Activated CD4-positive, alpha-beta memory T cell treated with anti-CD3 and anti-CD28 coated beads for 36 hours (primary cell): ENCODE measurements at regions of chr6 and their contacts with region 1.

Region 1: DNA sequence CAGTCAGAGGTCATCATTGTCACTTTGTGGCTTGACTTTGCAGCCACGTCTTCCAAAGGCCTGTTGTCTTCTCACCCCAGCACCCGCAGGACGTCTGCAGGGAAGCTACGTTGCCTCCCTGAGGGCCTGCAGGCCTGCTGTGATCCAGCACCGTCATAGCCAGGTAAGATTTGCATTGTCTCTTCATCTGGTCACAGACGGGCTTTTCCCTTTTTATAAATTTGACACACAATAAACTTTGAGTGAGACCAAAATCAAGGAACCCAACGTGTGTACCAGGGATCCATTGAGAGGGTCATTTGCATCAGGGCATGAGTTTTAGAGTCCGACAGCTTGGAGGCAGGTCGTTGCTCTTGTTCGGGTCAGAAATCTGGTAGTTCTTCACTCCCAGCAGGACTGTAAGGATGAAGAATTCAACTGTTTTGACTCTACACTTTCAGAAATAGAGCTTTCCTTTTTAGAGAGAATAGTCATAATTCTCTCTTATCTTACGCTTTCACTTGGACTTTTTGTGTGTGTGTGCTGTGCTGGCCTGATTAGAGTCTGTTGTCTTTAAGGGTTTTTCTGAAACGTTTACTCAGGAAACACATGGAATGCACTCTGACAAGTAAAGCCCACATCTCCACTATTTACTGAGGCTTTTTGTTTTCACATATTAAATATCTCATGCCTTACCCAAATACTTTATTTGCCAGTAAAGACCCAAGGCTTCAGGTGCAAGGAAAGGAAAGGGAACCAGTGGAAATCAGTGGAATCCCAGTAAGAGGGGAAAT is 177.2 kb upstream of the TAB2 start:
- DNase-seq: peak; percentile 93
- H3K4me3 Mint-ChIP-seq: peak overlapping the region; percentile 78
- H3K27ac Mint-ChIP-seq: peak overlapping the region; percentile 96
- H3K4me1 Mint-ChIP-seq: peaks cover 58% of the 10 kb centered on the region
- H3K27me3 Mint-ChIP-seq: no peaks in the 10 kb centered on the region

Region 2: GRCh38 chr6:148760568-148761526 is 379.5 kb before region 1 on chr6:
- CTCF ChIA-PET with region 1: no interaction called
- POLR2A ChIA-PET with region 1: no interaction called
- intact Hi-C with region 1: loop called (anchors 2 kb)
- DNase-seq: peak; percentile 75
- H3K4me3 Mint-ChIP-seq: peak overlapping the region; percentile 65
- H3K27ac Mint-ChIP-seq: peak overlapping the region; percentile 88
- H3K4me1 Mint-ChIP-seq: peaks cover 73% of the 10 kb centered on the region
- H3K27me3 Mint-ChIP-seq: peaks cover 8% of the 10 kb centered on the region

Region 3: DNA sequence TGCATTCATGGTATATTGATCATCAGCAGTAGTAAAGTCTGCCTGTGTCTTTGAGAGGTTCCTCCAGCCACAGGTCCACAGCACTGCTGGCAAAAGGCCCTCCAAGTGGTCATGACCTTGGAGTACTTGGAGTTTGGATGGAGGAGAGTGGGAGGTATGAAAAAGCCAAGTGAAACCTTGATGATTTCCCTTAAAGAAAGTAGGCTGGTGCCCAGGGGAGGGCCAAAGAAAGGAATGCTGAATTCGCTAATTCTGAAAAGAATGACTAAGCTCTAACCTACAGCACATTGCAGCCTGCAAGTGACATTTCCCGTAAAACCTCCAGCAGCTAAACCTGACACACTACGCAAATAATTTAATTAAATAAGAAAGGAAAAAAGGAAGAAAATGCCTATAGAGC is 46.2 kb before region 1 on chr6:
- CTCF ChIA-PET with region 1: interaction called, 5 read pairs
- POLR2A ChIA-PET with region 1: interaction called, 34 read pairs
- intact Hi-C with region 1: loop called (anchors 1 kb)
- DNase-seq: peak; percentile 51
- H3K4me3 Mint-ChIP-seq: peak overlapping the region; percentile 45
- H3K27ac Mint-ChIP-seq: peak overlapping the region; percentile 93
- H3K4me1 Mint-ChIP-seq: peaks cover 67% of the 10 kb centered on the region
- H3K27me3 Mint-ChIP-seq: no peaks in the 10 kb centered on the region

Region 4: DNA sequence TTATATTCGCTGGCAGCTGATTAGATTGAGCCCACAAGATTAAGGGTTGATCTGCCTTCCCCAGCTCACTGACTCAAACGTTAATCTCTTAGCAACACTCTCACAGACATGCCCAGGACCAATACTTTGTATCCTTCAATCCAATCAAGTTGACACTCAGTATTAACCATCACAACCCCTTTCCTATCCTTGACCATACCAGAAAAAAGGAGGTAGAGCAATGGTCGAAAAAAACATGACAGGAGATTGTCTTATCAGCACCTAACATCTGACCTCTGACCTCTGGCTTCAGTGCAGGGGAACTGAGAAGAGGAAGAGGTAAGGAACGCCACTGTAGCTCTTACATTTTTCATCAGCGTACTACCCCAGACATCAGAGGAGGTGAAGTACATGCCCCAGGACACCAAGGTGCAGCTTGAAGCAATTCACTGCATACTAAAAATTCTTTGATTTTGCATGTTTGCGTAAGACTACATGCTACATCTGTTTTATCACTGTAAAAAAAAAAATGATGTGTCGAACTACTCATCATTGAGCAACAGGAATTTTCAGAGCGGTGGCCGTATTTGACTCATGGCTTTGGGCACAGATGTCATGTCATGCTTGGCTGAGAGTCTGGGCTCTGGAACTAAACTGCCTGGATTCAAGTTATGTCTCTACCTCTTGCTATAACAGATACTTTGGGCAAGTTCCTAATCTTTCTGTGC is 10.8 kb before region 1 on chr6:
- CTCF ChIA-PET with region 1: interaction called, 4 read pairs
- POLR2A ChIA-PET with region 1: interaction called, 5 read pairs
- intact Hi-C with region 1: loop called (anchors 1 kb)
- DNase-seq: peak; percentile 64
- H3K4me3 Mint-ChIP-seq: no peak overlapping the region
- H3K27ac Mint-ChIP-seq: peak overlapping the region; percentile 90
- H3K4me1 Mint-ChIP-seq: peaks cover 65% of the 10 kb centered on the region
- H3K27me3 Mint-ChIP-seq: no peaks in the 10 kb centered on the region

Region 5: GRCh38 chr6:149211046-149211571 is 70.8 kb after region 1 on chr6:
- CTCF ChIA-PET with region 1: no interaction called
- POLR2A ChIA-PET with region 1: interaction called, 9 read pairs
- intact Hi-C with region 1: loop called (anchors 2 kb)
- DNase-seq: peak; percentile 54
- H3K4me3 Mint-ChIP-seq: peak overlapping the region; percentile 53
- H3K27ac Mint-ChIP-seq: no peak overlapping the region
- H3K4me1 Mint-ChIP-seq: peaks cover 22% of the 10 kb centered on the region
- H3K27me3 Mint-ChIP-seq: no peaks in the 10 kb centered on the region

Region 6: GRCh38 chr6:149271348-149272340 is 131.3 kb after region 1 on chr6:
- CTCF ChIA-PET with region 1: no interaction called
- POLR2A ChIA-PET with region 1: no interaction called
- intact Hi-C with region 1: loop called (anchors 5 kb)
- DNase-seq: peak; percentile 85
- H3K4me3 Mint-ChIP-seq: peak overlapping the region; percentile 45
- H3K27ac Mint-ChIP-seq: peak overlapping the region; percentile 93
- H3K4me1 Mint-ChIP-seq: peaks cover 35% of the 10 kb centered on the region
- H3K27me3 Mint-ChIP-seq: no peaks in the 10 kb centered on the region

Region 7: GRCh38 chr6:149499066-149499465 is 358.7 kb after region 1 on chr6:
- CTCF ChIA-PET with region 1: no interaction called
- POLR2A ChIA-PET with region 1: no interaction called
- intact Hi-C with region 1: loop called (anchors 5 kb)
- DNase-seq: no peak
- H3K4me3 Mint-ChIP-seq: no peak overlapping the region
- H3K27ac Mint-ChIP-seq: peak overlapping the region; percentile 97
- H3K4me1 Mint-ChIP-seq: peaks cover 82% of the 10 kb centered on the region
- H3K27me3 Mint-ChIP-seq: no peaks in the 10 kb centered on the region